ENCODE measurements at regions of chr1 and their contacts with region 1.

Region 1: GRCh38 chr1:118481121-118481520 is 296.1 kb upstream of the SPAG17 start:
- DNase-seq: peak; percentile 20 to 40
- H3K4me3 ChIP-seq: no peak overlapping the region
- H3K4me3 Mint-ChIP-seq: no peak overlapping the region
- H3K27ac Mint-ChIP-seq: no peak overlapping the region
- H3K4me1 ChIP-seq: no peaks in the 10 kb centered on the region
- H3K4me1 Mint-ChIP-seq: peaks cover 5% of the 10 kb centered on the region
- H3K27me3 ChIP-seq: no peaks in the 10 kb centered on the region
- H3K27me3 Mint-ChIP-seq: no peaks in the 10 kb centered on the region
- CTCF ChIP-seq: no peak

Region 2: DNA sequence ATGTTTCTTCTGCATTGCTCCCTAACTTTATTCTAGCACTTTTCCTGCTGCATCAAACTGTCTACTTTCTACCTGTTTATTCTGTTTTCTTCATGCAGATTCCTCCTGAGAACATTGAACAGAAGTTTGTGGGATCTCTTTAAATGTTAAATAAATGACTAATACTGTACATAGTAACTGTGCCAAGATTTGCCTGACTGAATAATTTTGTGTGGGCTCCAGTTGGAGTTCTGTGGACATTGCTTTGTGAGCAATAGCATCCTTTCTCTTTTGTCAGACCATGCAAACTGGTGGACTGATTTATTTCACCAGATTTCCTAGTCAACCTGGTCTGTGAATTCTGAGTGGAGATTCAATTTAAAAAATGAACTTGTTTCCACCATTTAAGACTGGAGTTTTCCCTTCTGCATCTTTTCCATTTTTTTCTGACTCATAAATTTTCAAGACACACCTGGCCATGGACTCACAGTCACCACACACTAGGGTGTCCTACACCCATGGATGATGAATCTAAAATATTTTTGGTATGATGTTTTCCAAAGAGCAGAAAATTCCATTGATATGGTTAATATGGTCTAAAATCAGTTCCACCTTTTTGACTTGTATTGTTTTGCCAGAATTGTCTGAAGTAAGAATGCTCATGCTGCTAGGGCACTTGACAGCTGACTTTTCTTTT is 155.4 kb before region 1 on chr1:
- CTCF ChIA-PET with region 1: no interaction called
- POLR2A ChIA-PET with region 1: no interaction called
- intact Hi-C with region 1: loop called (anchors 2 kb)
- DNase-seq: no peak
- H3K4me3 ChIP-seq: no peak overlapping the region
- H3K4me3 Mint-ChIP-seq: no peak overlapping the region
- H3K27ac Mint-ChIP-seq: no peak overlapping the region
- H3K4me1 ChIP-seq: peaks cover 18% of the 10 kb centered on the region
- H3K4me1 Mint-ChIP-seq: peaks cover 19% of the 10 kb centered on the region
- H3K27me3 ChIP-seq: no peaks in the 10 kb centered on the region
- H3K27me3 Mint-ChIP-seq: no peaks in the 10 kb centered on the region
- CTCF ChIP-seq: no peak

Region 3: GRCh38 chr1:118635955-118636354 is 154.8 kb after region 1 on chr1:
- CTCF ChIA-PET with region 1: no interaction called
- POLR2A ChIA-PET with region 1: no interaction called
- intact Hi-C with region 1: no loop called
- DNase-seq: no peak
- H3K4me3 ChIP-seq: no peak overlapping the region
- H3K4me3 Mint-ChIP-seq: no peak overlapping the region
- H3K27ac Mint-ChIP-seq: no peak overlapping the region
- H3K4me1 ChIP-seq: no peaks in the 10 kb centered on the region
- H3K4me1 Mint-ChIP-seq: no peaks in the 10 kb centered on the region
- H3K27me3 ChIP-seq: no peaks in the 10 kb centered on the region
- H3K27me3 Mint-ChIP-seq: peaks cover 5% of the 10 kb centered on the region
- CTCF ChIP-seq: no peak

Measured in Caco-2 (cell line).